ENCODE measurements at regions of chr18 and their contacts with region 1.

Region 1: GRCh38 chr18:12408247-12408869 is 629 bp downstream of the PRELID3A start:
- DNase-seq: peak; percentile 57
- H3K4me3 ChIP-seq: peak overlapping the region; percentile 92
- H3K27ac ChIP-seq: peak overlapping the region; percentile 64
- H3K4me1 ChIP-seq: peaks cover 28% of the 10 kb centered on the region
- CTCF ChIP-seq: no peak

Region 2: GRCh38 chr18:12287684-12288402 is 120.5 kb before region 1 on chr18:
- CTCF ChIA-PET with region 1: no interaction called
- POLR2A ChIA-PET with region 1: no interaction called
- intact Hi-C with region 1: no loop called
- DNase-seq: no peak
- H3K4me3 ChIP-seq: no peak overlapping the region
- H3K27ac ChIP-seq: no peak overlapping the region
- H3K4me1 ChIP-seq: no peaks in the 10 kb centered on the region
- CTCF ChIP-seq: no peak

Region 3: GRCh38 chr18:12304351-12305210 is 103.8 kb before region 1 on chr18:
- CTCF ChIA-PET with region 1: no interaction called
- POLR2A ChIA-PET with region 1: no interaction called
- intact Hi-C with region 1: no loop called
- DNase-seq: no peak
- H3K4me3 ChIP-seq: no peak overlapping the region
- H3K27ac ChIP-seq: no peak overlapping the region
- H3K4me1 ChIP-seq: no peaks in the 10 kb centered on the region
- CTCF ChIP-seq: no peak

Region 4: GRCh38 chr18:12336875-12337274 is 71.5 kb before region 1 on chr18:
- CTCF ChIA-PET with region 1: no interaction called
- POLR2A ChIA-PET with region 1: no interaction called
- intact Hi-C with region 1: no loop called
- DNase-seq: no peak
- H3K4me3 ChIP-seq: no peak overlapping the region
- H3K27ac ChIP-seq: no peak overlapping the region
- H3K4me1 ChIP-seq: no peaks in the 10 kb centered on the region
- CTCF ChIP-seq: no peak

Region 5: DNA sequence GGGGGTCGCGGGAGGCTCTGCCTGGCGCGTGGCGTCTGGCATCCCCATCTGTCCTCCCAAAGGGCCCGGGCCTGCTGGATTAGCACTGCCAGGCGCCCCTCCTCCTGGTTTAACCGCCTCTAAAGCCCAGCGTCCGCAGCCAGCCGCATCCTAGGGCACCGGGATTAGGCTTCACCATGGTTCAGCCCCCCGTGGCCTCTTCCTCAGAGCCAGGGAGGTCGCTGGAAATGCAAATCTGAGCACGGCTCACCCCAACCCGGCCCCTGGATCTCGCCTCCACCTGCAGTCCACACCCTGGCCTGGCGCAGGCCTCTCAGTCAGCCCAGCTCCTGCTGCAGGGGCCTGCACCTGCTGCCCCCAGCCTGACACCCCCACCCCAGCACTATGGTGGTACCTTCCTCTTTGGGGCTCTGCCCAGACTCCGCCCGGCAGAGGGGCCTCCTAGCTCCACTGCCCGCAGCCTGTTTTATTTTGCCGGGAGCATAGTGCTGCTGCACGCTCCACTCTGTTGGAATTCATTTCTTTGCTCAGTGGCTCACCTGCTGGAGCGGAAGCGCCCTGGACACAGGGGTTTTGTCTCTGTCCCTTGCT is 12.6 kb after region 1 on chr18:
- CTCF ChIA-PET with region 1: interaction called, 3 read pairs
- POLR2A ChIA-PET with region 1: interaction called, 19 read pairs
- intact Hi-C with region 1: loop called (anchors 1 kb)
- DNase-seq: peak; percentile 89
- H3K4me3 ChIP-seq: peak overlapping the region; percentile 66
- H3K27ac ChIP-seq: peak overlapping the region; percentile 71
- H3K4me1 ChIP-seq: peaks cover 23% of the 10 kb centered on the region
- CTCF ChIP-seq: no peak

Region 6: GRCh38 chr18:12702221-12703095 is 294.1 kb after region 1 on chr18 and contains the starts of genes CEP76 and PSMG2:
- CTCF ChIA-PET with region 1: no interaction called
- POLR2A ChIA-PET with region 1: interaction called, 3 read pairs
- intact Hi-C with region 1: loop called (anchors 1 kb)
- DNase-seq: peak; percentile 92
- H3K4me3 ChIP-seq: peak within 1 kb of the TSS; percentile 92
- H3K27ac ChIP-seq: peak within 1 kb of the TSS; percentile 79
- H3K4me1 ChIP-seq: peaks cover 34% of the 10 kb centered on the region
- CTCF ChIP-seq: no peak
- total RNA-seq, gene CEP76: 22.1 and 23.7 TPM in 2 replicates
- total RNA-seq, gene PSMG2: 61.7 and 69.2 TPM in 2 replicates